Activated T-helper 1 cell treated with anti-CD3 and anti-CD28 coated beads, Interleukin-12 subunit alpha, Interleukin-12 subunit beta, Interleukin-2, Interleukin-4 antibody, amounts not matched to agents 30 ng/mL and 10 ng/mL and 1 ng/mL, durations not matched to agents 14 hours and 24 hours and 36 hours (primary cell): ENCODE measurements at regions of chr1 and their contacts with region 1.

Region 1: DNA sequence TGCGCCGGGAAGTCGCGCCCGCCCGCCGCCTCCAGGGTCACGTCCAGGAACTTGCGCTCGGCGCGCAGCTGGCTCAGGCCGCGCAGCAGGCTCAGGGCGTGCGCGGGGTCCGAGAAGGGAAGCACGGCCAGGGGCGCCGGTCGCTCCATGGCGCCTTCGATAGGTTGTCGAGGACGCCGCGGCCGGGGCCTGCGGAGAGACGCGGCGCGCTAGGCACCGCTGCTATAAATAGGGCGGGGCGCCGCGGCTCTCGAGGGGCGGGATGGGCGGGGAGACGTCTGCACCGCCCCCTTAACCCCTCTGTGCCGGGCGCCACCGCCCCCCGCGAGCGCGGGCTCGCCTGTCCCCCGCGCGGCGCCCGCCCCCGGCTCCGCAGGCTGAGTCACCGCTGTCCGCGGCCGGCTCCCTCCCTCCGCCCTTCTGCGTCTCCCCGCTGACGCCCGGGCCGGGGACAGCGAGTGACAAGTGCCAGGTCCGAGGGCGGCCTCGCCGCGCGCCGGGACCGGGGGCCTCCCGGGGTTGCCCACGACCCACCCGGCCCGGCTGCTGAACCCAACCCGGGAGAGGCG is at the start of gene KLHL21:
- DNase-seq: peak; percentile 75
- H3K4me3 Mint-ChIP-seq: peak within 1 kb of the TSS; percentile 90
- H3K27ac Mint-ChIP-seq: peak within 1 kb of the TSS; percentile 96
- H3K4me1 Mint-ChIP-seq: peaks cover 28% of the 10 kb centered on the region
- H3K27me3 Mint-ChIP-seq: peaks cover 2% of the 10 kb centered on the region
- total RNA-seq, gene KLHL21: 27.8 and 28.1 TPM in 2 replicates

Region 2: DNA sequence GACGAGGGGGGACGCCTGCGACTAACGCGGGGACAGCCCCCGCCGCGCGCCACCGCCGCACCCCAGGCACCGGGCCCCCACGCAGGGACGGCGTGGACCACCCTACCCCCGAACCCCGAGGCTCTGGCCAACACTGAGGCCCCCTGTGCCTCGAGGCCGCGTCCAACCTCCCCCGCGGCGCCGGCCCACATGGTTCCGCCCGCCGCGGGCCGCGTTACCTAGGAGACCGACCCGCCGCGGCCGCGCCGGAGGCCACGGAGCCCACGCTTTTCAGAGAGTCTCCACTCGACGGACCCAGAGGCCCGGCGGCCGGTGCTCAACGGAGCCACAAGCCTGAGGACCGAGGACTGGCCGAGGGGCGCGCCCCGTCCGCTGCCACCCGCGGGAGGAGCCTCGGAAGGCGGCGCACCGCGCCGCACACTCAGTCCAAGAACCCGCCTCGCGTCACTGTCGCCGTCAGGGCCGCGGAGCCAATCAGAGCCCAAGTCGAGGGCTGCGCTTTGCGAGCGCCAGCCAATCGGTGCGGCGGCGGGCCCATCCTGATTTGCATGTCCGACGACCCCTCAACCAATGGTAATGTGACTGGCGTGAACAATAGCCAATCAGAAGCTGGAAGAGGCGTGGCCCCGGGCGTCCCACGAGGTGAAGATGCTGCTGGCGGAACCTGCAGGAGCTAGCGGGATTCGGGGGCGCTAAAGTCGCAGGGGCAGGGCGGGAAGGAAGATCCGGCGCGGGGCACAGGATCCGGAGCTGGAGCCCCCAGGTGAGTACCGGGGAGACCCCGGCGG is 610.5 kb before region 1 on chr1 and contains the start of gene NPHP4:
- intact Hi-C with region 1: loop called (anchors 2 kb)
- DNase-seq: peak; percentile 100
- H3K4me3 Mint-ChIP-seq: peak within 1 kb of the TSS; percentile 95
- H3K27ac Mint-ChIP-seq: peak within 1 kb of the TSS; percentile 98
- H3K4me1 Mint-ChIP-seq: peaks cover 38% of the 10 kb centered on the region
- H3K27me3 Mint-ChIP-seq: no peaks in the 10 kb centered on the region
- total RNA-seq, gene NPHP4: 18.3 and 18.6 TPM in 2 replicates

Region 3: GRCh38 chr1:6393400-6394187 is 209.2 kb before region 1 on chr1 and contains the start of gene ACOT7:
- intact Hi-C with region 1: loop called (anchors 5 kb)
- DNase-seq: peak; percentile 87
- H3K4me3 Mint-ChIP-seq: peak within 1 kb of the TSS; percentile 89
- H3K27ac Mint-ChIP-seq: peak within 1 kb of the TSS; percentile 94
- H3K4me1 Mint-ChIP-seq: peaks cover 35% of the 10 kb centered on the region
- H3K27me3 Mint-ChIP-seq: no peaks in the 10 kb centered on the region
- total RNA-seq, gene ACOT7: 124 and 126 TPM in 2 replicates

Region 4: DNA sequence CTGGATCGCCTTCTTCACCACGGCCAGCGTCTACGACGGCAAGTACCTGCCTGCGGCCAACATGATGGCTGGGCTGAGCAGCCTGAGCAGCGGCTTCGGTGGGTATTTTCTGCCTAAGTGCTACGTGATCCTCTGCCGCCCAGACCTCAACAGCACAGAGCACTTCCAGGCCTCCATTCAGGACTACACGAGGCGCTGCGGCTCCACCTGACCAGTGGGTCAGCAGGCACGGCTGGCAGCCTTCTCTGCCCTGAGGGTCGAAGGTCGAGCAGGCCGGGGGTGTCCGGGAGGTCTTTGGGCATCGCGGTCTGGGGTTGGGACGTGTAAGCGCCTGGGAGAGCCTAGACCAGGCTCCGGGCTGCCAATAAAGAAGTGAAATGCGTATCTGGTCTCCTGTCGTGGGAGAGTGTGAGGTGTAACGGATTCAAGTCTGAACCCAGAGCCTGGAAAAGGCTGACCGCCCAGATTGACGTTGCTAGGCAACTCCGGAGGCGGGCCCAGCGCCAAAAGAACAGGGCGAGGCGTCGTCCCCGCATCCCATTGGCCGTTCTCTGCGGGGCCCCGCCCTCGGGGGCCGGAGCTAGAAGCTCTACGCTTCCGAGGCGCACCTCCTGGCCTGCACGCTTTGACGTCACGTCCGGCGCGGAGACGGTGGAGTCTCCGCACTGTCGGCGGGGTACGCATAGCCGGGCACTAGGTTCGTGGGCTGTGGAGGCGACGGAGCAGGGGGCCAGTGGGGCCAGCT is 23.2 kb before region 1 on chr1 and contains the start of gene ZBTB48:
- intact Hi-C with region 1: loop called (anchors 1 kb)
- DNase-seq: peak; percentile 97
- H3K4me3 Mint-ChIP-seq: peak within 1 kb of the TSS; percentile 95
- H3K27ac Mint-ChIP-seq: peak within 1 kb of the TSS; percentile 98
- H3K4me1 Mint-ChIP-seq: peaks cover 36% of the 10 kb centered on the region
- H3K27me3 Mint-ChIP-seq: no peaks in the 10 kb centered on the region
- total RNA-seq, gene ZBTB48: 34.5 and 35.7 TPM in 2 replicates

Region 5: DNA sequence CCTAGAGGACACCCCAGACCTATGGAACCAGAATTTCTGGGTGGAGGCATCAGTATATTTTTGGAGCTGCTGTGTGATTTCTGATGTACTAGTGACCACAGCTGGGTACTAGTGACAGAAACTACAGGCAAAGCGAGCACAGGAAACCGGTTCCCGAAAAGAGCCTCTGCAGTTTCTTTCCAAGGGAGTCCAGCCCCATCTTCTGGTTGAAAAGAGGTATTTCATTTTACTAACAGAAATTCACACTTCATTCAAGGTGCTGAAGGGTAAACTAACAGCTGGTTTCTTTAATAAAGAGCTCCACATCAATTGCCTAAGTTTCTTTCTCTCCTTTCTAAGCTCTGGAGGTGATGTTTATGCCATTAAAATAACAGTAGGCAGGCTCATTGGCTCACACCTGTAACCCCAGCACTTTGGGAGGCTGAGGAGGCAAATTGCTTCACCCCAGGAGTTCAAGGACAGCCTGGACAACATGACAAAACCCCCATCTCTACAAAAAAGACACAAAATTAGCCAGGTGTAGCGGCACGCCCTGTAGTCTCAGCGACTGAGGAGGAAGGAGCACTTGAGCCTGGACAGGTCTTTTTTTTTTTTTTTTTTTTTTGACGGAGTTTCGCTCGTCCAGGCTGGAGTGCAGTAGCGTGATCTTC is 43.9 kb after region 1 on chr1:
- intact Hi-C with region 1: loop called (anchors 1 kb)
- DNase-seq: no peak
- H3K4me3 Mint-ChIP-seq: no peak overlapping the region
- H3K27ac Mint-ChIP-seq: no peak overlapping the region
- H3K4me1 Mint-ChIP-seq: peaks cover 7% of the 10 kb centered on the region
- H3K27me3 Mint-ChIP-seq: no peaks in the 10 kb centered on the region

Region 6: GRCh38 chr1:6784560-6785317 is 182.0 kb after region 1 on chr1:
- intact Hi-C with region 1: loop called (anchors 2 kb)
- DNase-seq: peak; percentile 99
- H3K4me3 Mint-ChIP-seq: peak overlapping the region; percentile 88
- H3K27ac Mint-ChIP-seq: peak overlapping the region; percentile 91
- H3K4me1 Mint-ChIP-seq: peaks cover 38% of the 10 kb centered on the region
- H3K27me3 Mint-ChIP-seq: peaks cover 6% of the 10 kb centered on the region